PC-3 (cell line): ENCODE measurements at regions of chr4 and their contacts with region 1.

Region 1: GRCh38 chr4:168882630-168883233 is 127.3 kb downstream of the CBR4 start:
- DNase-seq: peak; percentile 19
- ATAC-seq: no peak
- H3K4me3 ChIP-seq: no peak overlapping the region
- H3K27ac ChIP-seq: no peak overlapping the region
- H3K4me1 ChIP-seq: peaks cover 4% of the 10 kb centered on the region; the same call in 1 of the 2 replicates
- H3K27me3 ChIP-seq: no peaks in the 10 kb centered on the region
- CTCF ChIP-seq: no peak

Region 2: DNA sequence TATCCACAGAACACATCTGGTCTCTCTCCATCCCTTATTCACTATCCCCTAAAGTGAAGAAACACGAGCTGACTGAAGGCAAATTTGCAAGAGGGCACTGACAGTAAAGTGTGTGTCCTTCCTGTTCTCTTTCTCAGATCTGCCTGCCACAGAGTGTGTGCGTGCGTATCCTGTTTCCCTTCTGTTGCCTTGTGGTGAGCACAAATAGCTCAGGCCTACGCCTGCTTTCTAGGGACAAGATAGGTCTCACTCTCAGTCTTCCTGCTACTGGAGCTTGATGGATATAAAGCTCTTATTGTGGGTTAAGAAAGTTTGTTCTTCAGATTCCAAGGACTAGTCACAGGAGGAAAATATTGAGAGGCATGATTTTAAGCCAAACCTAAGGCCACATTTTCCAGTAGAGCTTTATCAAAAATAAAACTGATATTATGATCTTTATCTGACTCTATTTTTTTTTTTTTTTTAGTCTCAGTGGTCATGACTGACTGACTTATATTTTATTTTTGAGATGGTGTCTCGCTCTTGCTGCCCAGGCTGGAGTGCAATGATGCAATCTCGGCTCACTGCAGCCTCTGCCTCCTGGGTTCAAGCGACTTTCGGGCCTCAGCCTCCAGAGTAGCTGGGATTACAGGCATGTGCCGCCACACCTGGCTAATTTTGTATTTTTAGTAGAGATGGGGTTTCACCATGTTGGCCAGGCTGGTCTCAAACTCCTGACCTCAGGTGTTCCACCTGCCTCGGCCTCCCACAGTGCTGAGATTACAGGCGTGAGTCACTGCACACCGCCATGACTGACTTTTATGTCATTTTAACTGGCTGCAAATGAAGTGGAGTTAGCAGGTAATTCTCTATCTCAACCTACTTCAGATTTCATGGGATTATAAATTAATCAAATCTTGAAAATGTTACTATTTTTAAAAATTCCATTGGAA is 528.4 kb after region 1 on chr4:
- CTCF ChIA-PET with region 1: no interaction called
- POLR2A ChIA-PET with region 1: interaction called, 17 read pairs
- intact Hi-C with region 1: no loop called
- DNase-seq: peak; percentile 31
- ATAC-seq: no peak
- H3K4me3 ChIP-seq: no peak overlapping the region
- H3K27ac ChIP-seq: no peak overlapping the region
- H3K4me1 ChIP-seq: peaks cover 19% of the 10 kb centered on the region
- H3K27me3 ChIP-seq: no peaks in the 10 kb centered on the region
- CTCF ChIP-seq: no peak